ENCODE measurements at regions of chr3 and their contacts with region 1.

Region 1: GRCh38 chr3:110314512-110315114 is 757.0 kb upstream of the NECTIN3 start:
- DNase-seq: peak in 2 of 3 donors; percentile 13 to 34
- ATAC-seq: peak; percentile 38 to 44
- H3K4me3 ChIP-seq: no peak overlapping the region
- H3K27ac ChIP-seq: no peak overlapping the region
- H3K4me1 ChIP-seq: no peaks in the 10 kb centered on the region
- H3K27me3 ChIP-seq: no peaks in the 10 kb centered on the region

Region 2: GRCh38 chr3:109731620-109732473 is 582.8 kb before region 1 on chr3:
- intact Hi-C with region 1: loop called in 3 of 4 experiments (anchors 10 kb)
- DNase-seq: no peak
- ATAC-seq: peak; percentile 59 to 66
- H3K4me3 ChIP-seq: no peak overlapping the region
- H3K27ac ChIP-seq: no peak overlapping the region
- H3K4me1 ChIP-seq: no peaks in the 10 kb centered on the region
- H3K27me3 ChIP-seq: no peaks in the 10 kb centered on the region